ENCODE measurements at regions of chr17 and their contacts with region 1.

Region 1: GRCh38 chr17:47895856-47896671 is at the start of gene SP2:
- DNase-seq: peak; percentile 100
- ATAC-seq: peak; percentile 96
- H3K4me3 Mint-ChIP-seq: peak within 1 kb of the TSS; percentile 97
- H3K27ac Mint-ChIP-seq: peak within 1 kb of the TSS; percentile 95
- H3K4me1 Mint-ChIP-seq: peaks cover 44% of the 10 kb centered on the region
- H3K27me3 Mint-ChIP-seq: no peaks in the 10 kb centered on the region
- total RNA-seq, gene SP2: 23.7 to 24.5 TPM

Region 2: GRCh38 chr17:47831003-47831933 is 64.8 kb before region 1 on chr17 and contains the starts of genes LRRC46 and MRPL10:
- CTCF ChIA-PET with region 1: interaction called, 5 read pairs
- POLR2A ChIA-PET with region 1: interaction called, 25 read pairs
- DNase-seq: peak; percentile 95
- ATAC-seq: peak; percentile 90
- H3K4me3 Mint-ChIP-seq: peak within 1 kb of the TSS; percentile 84
- H3K27ac Mint-ChIP-seq: peak within 1 kb of the TSS; percentile 92
- H3K4me1 Mint-ChIP-seq: peaks cover 50% of the 10 kb centered on the region
- H3K27me3 Mint-ChIP-seq: no peaks in the 10 kb centered on the region
- total RNA-seq, gene LRRC46: 0.82 to 0.97 TPM
- total RNA-seq, gene MRPL10: 37.9 to 41.6 TPM

Region 3: DNA sequence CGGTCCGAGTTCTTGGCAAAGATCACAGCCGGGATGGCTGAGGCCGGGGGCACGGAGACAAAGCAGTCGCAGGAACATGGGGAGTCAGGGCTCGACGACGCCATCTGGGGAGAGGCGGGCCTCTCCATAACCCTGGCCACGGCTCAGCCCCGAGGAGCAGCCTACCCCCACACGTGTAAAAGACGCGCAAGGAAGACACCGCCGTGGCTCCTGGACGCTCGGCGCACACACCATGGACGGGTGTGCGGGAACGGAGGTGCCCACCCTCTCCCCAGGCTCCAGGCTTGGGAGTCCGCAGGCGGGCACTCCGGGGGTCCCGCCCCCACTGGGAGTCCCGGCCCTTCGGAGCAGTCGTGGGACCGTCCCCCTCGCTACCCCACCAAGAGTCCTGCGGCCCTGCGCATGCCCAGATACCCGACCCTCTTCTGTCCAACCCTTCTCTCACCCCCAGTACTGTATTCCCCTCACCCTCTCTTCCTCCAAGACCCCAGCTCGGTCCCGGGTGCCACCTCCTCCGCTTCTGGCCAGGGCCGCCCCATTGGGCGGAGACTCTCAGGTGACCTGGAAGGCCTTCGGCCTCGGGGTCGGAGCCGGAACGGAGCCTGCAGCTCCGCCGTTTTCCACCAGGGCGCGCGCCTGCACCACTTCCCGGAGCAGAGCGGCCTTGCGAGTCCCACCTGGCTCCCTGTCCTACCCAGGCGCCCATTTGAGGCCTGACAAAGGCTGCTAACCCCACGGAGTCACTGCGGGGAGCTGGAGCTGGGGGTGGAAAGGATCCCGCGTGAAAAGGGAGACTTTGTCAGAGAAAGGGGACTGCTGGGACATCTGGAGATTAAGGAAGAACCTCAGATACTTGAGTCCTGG is 55.1 kb before region 1 on chr17 and contains the start of gene SCRN2:
- CTCF ChIA-PET with region 1: interaction called, 538 read pairs
- POLR2A ChIA-PET with region 1: interaction called, 19 read pairs
- DNase-seq: peak; percentile 91
- ATAC-seq: peak; percentile 92
- H3K4me3 Mint-ChIP-seq: peak within 1 kb of the TSS; percentile 99
- H3K27ac Mint-ChIP-seq: peak within 1 kb of the TSS; percentile 95
- H3K4me1 Mint-ChIP-seq: peaks cover 30% of the 10 kb centered on the region
- H3K27me3 Mint-ChIP-seq: peaks cover 16% of the 10 kb centered on the region
- total RNA-seq, gene SCRN2: 24.1 to 24.8 TPM

Region 4: DNA sequence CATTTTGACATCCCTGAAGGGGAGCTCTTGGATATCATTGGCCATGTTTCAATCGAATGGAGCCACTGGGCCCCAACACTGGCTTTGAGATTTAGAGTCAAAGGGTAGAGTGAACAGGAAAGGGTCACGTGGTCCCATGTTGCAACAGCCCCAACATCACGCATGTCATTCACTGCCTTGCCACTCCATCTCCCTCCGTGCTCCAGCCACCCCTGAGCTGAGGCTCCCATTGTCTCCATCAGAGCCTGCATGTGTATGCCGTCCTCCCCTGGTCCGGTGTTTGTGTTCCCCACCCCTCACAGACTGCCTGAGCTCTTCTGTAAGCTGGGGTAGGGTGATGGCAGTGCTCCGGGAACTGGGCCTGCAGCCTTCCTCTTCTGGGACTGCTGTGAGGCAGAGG is 164.2 kb after region 1 on chr17:
- CTCF ChIA-PET with region 1: no interaction called
- POLR2A ChIA-PET with region 1: no interaction called
- DNase-seq: no peak
- ATAC-seq: no peak
- H3K4me3 Mint-ChIP-seq: no peak overlapping the region
- H3K27ac Mint-ChIP-seq: no peak overlapping the region
- H3K4me1 Mint-ChIP-seq: peaks cover 14% of the 10 kb centered on the region
- H3K27me3 Mint-ChIP-seq: no peaks in the 10 kb centered on the region